Activated naive CD4-positive, alpha-beta T cell treated with anti-CD3 and anti-CD28 coated beads for 36 hours (primary cell): ENCODE measurements at regions of chr19 and their contacts with region 1.

Region 1: GRCh38 chr19:3783660-3784584 is 2.3 kb downstream of the MATK start:
- DNase-seq: peak; percentile 58
- H3K4me3 Mint-ChIP-seq: peak overlapping the region; percentile 79
- H3K27ac Mint-ChIP-seq: no peak overlapping the region
- H3K4me1 Mint-ChIP-seq: peaks cover 7% of the 10 kb centered on the region
- H3K27me3 Mint-ChIP-seq: no peaks in the 10 kb centered on the region

Region 2: DNA sequence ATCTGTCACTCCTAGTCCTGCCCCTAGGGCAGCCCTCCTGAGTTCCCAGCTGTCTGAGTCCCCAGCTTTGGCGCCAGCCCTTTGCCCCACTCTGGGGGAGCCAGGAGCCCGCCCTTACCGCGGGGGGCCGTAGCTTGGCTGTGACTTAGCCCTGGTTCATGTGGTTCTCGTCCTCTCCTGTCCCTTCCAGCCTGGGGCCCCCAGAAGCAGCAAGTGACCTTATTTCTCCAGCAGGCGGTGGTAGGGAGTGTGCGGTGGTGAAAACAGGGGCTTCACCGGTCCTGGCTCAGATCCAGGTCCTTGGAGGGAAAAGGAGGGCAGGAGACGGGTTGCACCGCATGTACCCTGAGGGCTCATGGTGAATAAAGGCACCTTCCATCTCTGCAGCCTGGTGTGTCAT is 190.8 kb before region 1 on chr19:
- CTCF ChIA-PET with region 1: no interaction called
- intact Hi-C with region 1: no loop called
- DNase-seq: no peak
- H3K4me3 Mint-ChIP-seq: no peak overlapping the region
- H3K27ac Mint-ChIP-seq: no peak overlapping the region
- H3K4me1 Mint-ChIP-seq: no peaks in the 10 kb centered on the region
- H3K27me3 Mint-ChIP-seq: no peaks in the 10 kb centered on the region

Region 3: DNA sequence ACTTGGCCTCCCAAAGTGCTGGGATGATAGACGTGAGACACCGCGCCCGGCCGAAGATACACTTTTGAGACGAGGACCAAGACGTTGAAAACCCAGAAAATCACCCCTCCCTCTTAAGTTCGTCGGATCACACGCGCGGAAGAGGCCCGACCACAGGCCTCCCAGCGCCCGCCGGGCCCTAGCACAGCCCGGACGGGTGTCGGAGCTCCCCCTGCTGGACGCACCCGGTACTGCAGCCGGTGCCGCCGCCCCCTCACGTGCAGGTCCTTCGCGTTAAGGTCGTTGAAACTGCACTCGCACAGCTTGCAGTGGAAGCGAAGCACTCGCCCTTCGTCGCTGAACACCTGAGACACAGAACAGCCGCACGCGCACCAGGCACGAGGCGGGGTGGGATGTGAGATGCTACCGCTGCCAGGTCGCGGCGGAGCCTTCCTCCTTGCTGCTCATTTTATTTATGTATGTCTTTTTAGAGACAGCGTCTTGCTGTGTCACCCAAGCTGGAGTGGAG is 38.0 kb after region 1 on chr19:
- CTCF ChIA-PET with region 1: interaction called, 8 read pairs
- intact Hi-C with region 1: loop called (anchors 2 kb)
- DNase-seq: peak; percentile 91
- H3K4me3 Mint-ChIP-seq: no peak overlapping the region
- H3K27ac Mint-ChIP-seq: no peak overlapping the region
- H3K4me1 Mint-ChIP-seq: peaks cover 30% of the 10 kb centered on the region
- H3K27me3 Mint-ChIP-seq: no peaks in the 10 kb centered on the region